CD8-positive, alpha-beta T cell (primary cell): ENCODE measurements at regions of chr6 and their contacts with region 1.

Region 1: DNA sequence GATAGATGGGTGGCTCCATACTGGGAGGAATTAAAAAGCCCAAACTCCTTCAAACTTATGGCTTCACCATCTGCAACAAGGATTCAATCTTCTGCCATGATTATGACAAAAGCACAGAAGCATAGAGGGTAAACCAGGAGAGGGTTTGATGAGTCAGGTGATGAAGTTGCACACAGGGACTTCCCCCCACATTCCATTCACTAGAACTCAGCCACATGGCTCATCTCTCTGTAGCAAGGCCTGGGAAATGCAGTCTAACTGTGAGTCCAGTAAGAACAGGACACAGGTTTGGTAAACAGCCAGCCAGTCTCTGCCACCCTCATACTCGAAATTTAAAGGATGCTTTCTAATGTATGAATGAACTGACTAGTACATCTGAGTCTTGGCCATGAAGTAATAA is 142.9 kb downstream of the HIVEP2 start:
- DNase-seq: peak in 1 of 9 experiments; percentile 38
- ATAC-seq: no peak
- H3K4me3 ChIP-seq: no peak overlapping the region
- H3K4me3 Mint-ChIP-seq: no peak overlapping the region
- H3K27ac ChIP-seq: no peak overlapping the region
- H3K27ac Mint-ChIP-seq: peak overlapping the region; percentile 15
- H3K4me1 ChIP-seq: peaks cover 26% of the 10 kb centered on the region
- H3K4me1 Mint-ChIP-seq: peaks cover 92% of the 10 kb centered on the region
- H3K27me3 ChIP-seq: no peaks in the 10 kb centered on the region
- H3K27me3 Mint-ChIP-seq: no peaks in the 10 kb centered on the region
- CTCF ChIP-seq: no peak

Region 2: DNA sequence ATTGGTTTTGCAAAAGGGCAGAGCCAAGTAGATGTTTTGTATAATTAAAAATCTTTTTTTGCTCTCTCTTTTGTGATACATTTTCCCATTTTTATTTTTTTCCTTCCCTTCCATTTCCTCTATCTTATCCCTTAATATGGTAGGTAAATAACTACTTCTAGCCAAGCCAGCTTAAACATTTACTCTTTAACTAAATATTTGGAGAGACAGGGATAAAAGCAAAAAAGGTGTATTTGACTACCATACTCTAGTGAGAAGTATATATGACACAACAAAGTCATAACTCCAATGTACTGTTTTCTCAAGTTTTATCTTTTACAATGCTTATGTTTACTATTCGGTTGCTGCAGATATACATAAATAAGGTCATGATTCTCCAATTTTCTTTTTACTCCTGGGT is 11.9 kb before region 1 on chr6:
- CTCF ChIA-PET with region 1: interaction called, 5 read pairs
- POLR2A ChIA-PET with region 1: no interaction called
- intact Hi-C with region 1: loop called in 1 of 2 experiments (anchors 1 kb)
- DNase-seq: no peak
- ATAC-seq: no peak
- H3K4me3 ChIP-seq: no peak overlapping the region
- H3K4me3 Mint-ChIP-seq: no peak overlapping the region
- H3K27ac ChIP-seq: no peak overlapping the region
- H3K27ac Mint-ChIP-seq: peak overlapping the region; percentile 21
- H3K4me1 ChIP-seq: peaks cover 29% of the 10 kb centered on the region
- H3K4me1 Mint-ChIP-seq: peaks cover 65% of the 10 kb centered on the region
- H3K27me3 ChIP-seq: no peaks in the 10 kb centered on the region
- H3K27me3 Mint-ChIP-seq: no peaks in the 10 kb centered on the region
- CTCF ChIP-seq: no peak